ENCODE measurements at regions of chr12 and their contacts with region 1.

Region 1: GRCh38 chr12:8949342-8950220 is at the start of gene M6PR:
- DNase-seq: peak; percentile 98
- H3K4me3 ChIP-seq: peak within 1 kb of the TSS; percentile 69
- H3K4me3 Mint-ChIP-seq: peak within 1 kb of the TSS; percentile 83
- H3K27ac Mint-ChIP-seq: peak within 1 kb of the TSS; percentile 77
- H3K4me1 ChIP-seq: peaks cover 6% of the 10 kb centered on the region
- H3K4me1 Mint-ChIP-seq: peaks cover 9% of the 10 kb centered on the region
- H3K27me3 ChIP-seq: no peaks in the 10 kb centered on the region
- H3K27me3 Mint-ChIP-seq: no peaks in the 10 kb centered on the region
- CTCF ChIP-seq: peak; percentile 42 to 91
- total RNA-seq, gene M6PR: 303 and 310 TPM in 2 replicates

Region 2: DNA sequence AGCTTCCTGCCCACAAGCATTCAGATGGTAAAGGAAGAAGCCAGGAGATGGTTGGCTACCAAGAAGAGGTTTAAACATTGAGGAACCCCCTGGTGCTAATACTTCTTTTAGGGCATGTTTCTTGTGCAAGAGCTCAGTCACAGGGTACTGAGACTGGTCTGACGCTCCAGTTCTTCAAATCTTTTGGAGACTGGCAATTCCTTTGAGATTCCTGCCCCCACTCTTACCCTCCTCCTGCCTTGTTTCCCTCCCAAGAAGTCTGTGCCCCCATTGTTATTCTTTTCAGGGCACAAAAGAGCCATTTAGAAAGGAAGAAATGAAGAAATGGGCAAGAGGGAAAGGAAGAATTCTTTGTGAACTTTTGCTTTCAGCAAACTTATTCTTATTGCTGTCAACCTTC is 115.4 kb before region 1 on chr12:
- CTCF ChIA-PET with region 1: no interaction called
- POLR2A ChIA-PET with region 1: no interaction called
- intact Hi-C with region 1: no loop called
- DNase-seq: no peak
- H3K4me3 ChIP-seq: no peak overlapping the region
- H3K4me3 Mint-ChIP-seq: no peak overlapping the region
- H3K27ac Mint-ChIP-seq: no peak overlapping the region
- H3K4me1 ChIP-seq: no peaks in the 10 kb centered on the region
- H3K4me1 Mint-ChIP-seq: no peaks in the 10 kb centered on the region
- H3K27me3 ChIP-seq: 0 out of 2 replicates have a peak, but pooled peaks cover 1% of the 10 kb centered on the region
- H3K27me3 Mint-ChIP-seq: peaks cover 16% of the 10 kb centered on the region
- CTCF ChIP-seq: no peak

Region 3: DNA sequence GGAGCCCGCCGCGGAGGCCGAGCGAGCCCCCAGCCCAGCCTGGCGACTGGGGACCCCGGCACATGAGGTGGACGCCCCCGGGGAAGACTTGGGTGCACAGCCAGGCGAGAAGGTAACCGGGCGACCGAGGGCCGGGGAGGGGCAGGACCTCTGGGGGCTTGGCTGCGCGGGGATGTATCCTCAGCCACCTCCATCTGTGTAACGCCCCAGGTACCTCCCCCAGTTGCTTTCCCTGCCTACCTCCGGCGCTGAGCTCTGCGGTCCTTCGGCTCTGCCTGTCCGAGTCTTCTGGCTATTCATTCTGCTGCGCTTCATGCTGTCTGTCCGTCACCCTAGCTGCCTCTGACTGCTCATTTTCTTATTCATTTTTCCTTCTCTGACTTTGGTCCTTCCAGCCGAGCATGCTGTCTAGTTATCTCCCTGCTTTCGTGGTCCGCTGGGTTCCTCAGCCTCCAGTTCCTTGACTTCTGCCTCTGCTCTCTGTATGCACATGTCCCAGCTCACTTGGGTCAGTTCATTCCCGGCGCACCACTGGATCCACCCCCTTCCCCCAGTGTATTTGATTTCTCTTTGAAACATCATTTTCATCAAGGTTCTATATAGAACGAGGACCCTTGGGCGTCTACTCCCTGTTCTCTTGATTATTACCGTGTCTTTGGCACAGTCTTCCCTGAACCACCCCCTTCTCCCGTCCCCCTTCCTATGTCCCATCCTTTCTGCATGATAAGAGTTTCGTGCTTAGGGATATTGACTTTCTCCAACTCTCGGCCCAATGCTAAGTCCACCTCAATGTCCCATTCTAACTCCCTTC is 34.7 kb before region 1 on chr12:
- CTCF ChIA-PET with region 1: interaction called, 17 read pairs
- POLR2A ChIA-PET with region 1: interaction called, 17 read pairs
- intact Hi-C with region 1: loop called (anchors 1 kb)
- DNase-seq: peak; percentile 79 to 81
- H3K4me3 ChIP-seq: peak overlapping the region; percentile 49
- H3K4me3 Mint-ChIP-seq: no peak overlapping the region
- H3K27ac Mint-ChIP-seq: no peak overlapping the region
- H3K4me1 ChIP-seq: peaks cover 25% of the 10 kb centered on the region
- H3K4me1 Mint-ChIP-seq: peaks cover 15% of the 10 kb centered on the region
- H3K27me3 ChIP-seq: no peaks in the 10 kb centered on the region
- H3K27me3 Mint-ChIP-seq: no peaks in the 10 kb centered on the region
- CTCF ChIP-seq: no peak

Region 4: GRCh38 chr12:8969861-8970412 is 20.4 kb after region 1 on chr12:
- CTCF ChIA-PET with region 1: no interaction called
- POLR2A ChIA-PET with region 1: interaction called, 4 read pairs
- intact Hi-C with region 1: loop called (anchors 1 kb)
- DNase-seq: peak in 1 of 2 experiments; percentile 21
- H3K4me3 ChIP-seq: no peak overlapping the region
- H3K4me3 Mint-ChIP-seq: peak overlapping the region; percentile 5
- H3K27ac Mint-ChIP-seq: peak overlapping the region; percentile 2
- H3K4me1 ChIP-seq: peaks cover 14% of the 10 kb centered on the region
- H3K4me1 Mint-ChIP-seq: peaks cover 8% of the 10 kb centered on the region
- H3K27me3 ChIP-seq: no peaks in the 10 kb centered on the region
- H3K27me3 Mint-ChIP-seq: no peaks in the 10 kb centered on the region
- CTCF ChIP-seq: no peak

Region 5: DNA sequence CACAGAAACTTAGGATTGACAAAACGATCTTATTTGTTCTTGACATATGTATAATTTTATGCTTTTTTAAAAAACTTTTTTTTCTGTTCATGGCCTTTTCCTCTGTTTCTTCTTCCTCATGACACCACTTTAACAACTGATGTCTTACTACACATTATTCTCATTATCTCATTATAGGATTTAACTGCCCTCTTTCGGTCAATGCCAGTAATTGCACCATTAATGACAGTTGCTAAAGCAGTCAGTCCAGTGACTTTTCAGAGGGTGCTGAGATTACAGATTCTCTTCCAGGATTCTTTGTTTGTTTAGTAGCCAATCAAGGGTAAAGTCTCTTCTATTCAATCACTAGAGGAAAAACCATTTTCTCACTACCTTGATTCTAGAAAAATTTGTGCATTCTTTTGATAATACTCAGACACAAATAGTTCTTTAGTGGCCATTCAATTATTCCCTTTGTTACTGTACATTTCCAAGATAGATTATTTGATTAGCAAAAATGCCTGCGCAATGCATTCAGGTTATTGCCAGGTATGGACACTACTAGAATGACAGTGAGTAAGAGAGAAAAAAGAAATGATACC is 89.9 kb after region 1 on chr12:
- CTCF ChIA-PET with region 1: interaction called, 15 read pairs
- POLR2A ChIA-PET with region 1: no interaction called
- intact Hi-C with region 1: loop called (anchors 1 kb)
- DNase-seq: peak in 1 of 2 experiments; percentile 55
- H3K4me3 ChIP-seq: no peak overlapping the region
- H3K4me3 Mint-ChIP-seq: no peak overlapping the region
- H3K27ac Mint-ChIP-seq: no peak overlapping the region
- H3K4me1 ChIP-seq: no peaks in the 10 kb centered on the region
- H3K4me1 Mint-ChIP-seq: no peaks in the 10 kb centered on the region
- H3K27me3 ChIP-seq: 0 out of 2 replicates have a peak, but pooled peaks cover 1% of the 10 kb centered on the region
- H3K27me3 Mint-ChIP-seq: peaks cover 14% of the 10 kb centered on the region
- CTCF ChIP-seq: peak; percentile 70 to 89

Region 6: DNA sequence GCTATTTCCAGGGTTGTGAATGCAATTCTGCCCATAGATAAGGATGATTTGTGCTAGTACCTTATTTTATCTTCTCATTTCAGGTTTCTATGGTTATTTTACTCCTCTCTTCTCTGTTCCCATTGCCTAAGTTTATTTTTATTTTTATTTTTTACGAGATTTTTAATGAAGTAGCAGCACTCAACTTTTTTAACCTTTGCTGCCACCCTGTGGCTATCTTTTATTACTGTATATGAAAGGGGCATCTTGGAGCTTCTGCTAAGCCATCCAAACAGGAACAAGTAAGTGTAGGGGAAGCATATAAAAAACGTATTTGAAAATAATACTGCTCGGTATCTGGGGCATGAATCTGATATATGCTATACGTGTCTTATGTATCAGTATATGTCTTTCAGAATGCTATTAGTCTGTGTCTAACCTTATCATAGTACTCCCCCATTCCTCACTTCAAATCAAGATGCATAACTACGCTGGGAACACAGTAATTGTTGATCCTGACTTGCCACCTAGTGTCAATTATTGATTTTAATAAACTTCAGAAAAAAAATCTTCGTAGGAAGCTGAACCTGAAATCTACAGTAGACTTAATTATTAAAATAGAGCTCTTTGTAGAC is 100.0 kb after region 1 on chr12:
- CTCF ChIA-PET with region 1: interaction called, 29 read pairs
- POLR2A ChIA-PET with region 1: interaction called, 4 read pairs
- intact Hi-C with region 1: no loop called
- DNase-seq: peak in 1 of 2 experiments; percentile 56
- H3K4me3 ChIP-seq: no peak overlapping the region
- H3K4me3 Mint-ChIP-seq: no peak overlapping the region
- H3K27ac Mint-ChIP-seq: no peak overlapping the region
- H3K4me1 ChIP-seq: no peaks in the 10 kb centered on the region
- H3K4me1 Mint-ChIP-seq: no peaks in the 10 kb centered on the region
- H3K27me3 ChIP-seq: no peaks in the 10 kb centered on the region
- H3K27me3 Mint-ChIP-seq: peaks cover 33% of the 10 kb centered on the region
- CTCF ChIP-seq: peak; percentile 68 to 82

Region 7: GRCh38 chr12:9124383-9125031 is 174.9 kb after region 1 on chr12:
- CTCF ChIA-PET with region 1: no interaction called
- POLR2A ChIA-PET with region 1: no interaction called
- intact Hi-C with region 1: no loop called
- DNase-seq: no peak
- H3K4me3 ChIP-seq: no peak overlapping the region
- H3K4me3 Mint-ChIP-seq: no peak overlapping the region
- H3K27ac Mint-ChIP-seq: no peak overlapping the region
- H3K4me1 ChIP-seq: peaks cover 13% of the 10 kb centered on the region
- H3K4me1 Mint-ChIP-seq: peaks cover 7% of the 10 kb centered on the region
- H3K27me3 ChIP-seq: no peaks in the 10 kb centered on the region
- H3K27me3 Mint-ChIP-seq: no peaks in the 10 kb centered on the region
- CTCF ChIP-seq: no peak

Region 8: GRCh38 chr12:9925708-9926393 is 976.3 kb after region 1 on chr12:
- CTCF ChIA-PET with region 1: no interaction called
- POLR2A ChIA-PET with region 1: no interaction called
- intact Hi-C with region 1: no loop called
- DNase-seq: peak in 1 of 2 experiments; percentile 27
- H3K4me3 ChIP-seq: no peak overlapping the region
- H3K4me3 Mint-ChIP-seq: no peak overlapping the region
- H3K27ac Mint-ChIP-seq: no peak overlapping the region
- H3K4me1 ChIP-seq: no peaks in the 10 kb centered on the region
- H3K4me1 Mint-ChIP-seq: no peaks in the 10 kb centered on the region
- H3K27me3 ChIP-seq: no peaks in the 10 kb centered on the region
- H3K27me3 Mint-ChIP-seq: peaks cover 11% of the 10 kb centered on the region
- CTCF ChIP-seq: peak; percentile 42 to 55